Activated B cell treated with CpG ODN at 0.5 μM for 24 hours (primary cell): ENCODE measurements at regions of chrX and their contacts with region 1.

Region 1: GRCh38 chrX:110853610-110854009 is 58.0 kb upstream of the CHRDL1 start:
- DNase-seq: no peak
- ATAC-seq: no peak
- H3K4me3 Mint-ChIP-seq: no peak overlapping the region
- H3K27ac Mint-ChIP-seq: no peak overlapping the region
- H3K4me1 Mint-ChIP-seq: no peaks in the 10 kb centered on the region
- H3K27me3 Mint-ChIP-seq: peaks cover 3% of the 10 kb centered on the region
- CTCF ChIP-seq: no peak

Region 2: GRCh38 chrX:110759785-110760184 is 93.8 kb before region 1 on chrX:
- CTCF ChIA-PET with region 1: no interaction called
- POLR2A ChIA-PET with region 1: no interaction called
- intact Hi-C with region 1: no loop called
- DNase-seq: no peak
- ATAC-seq: no peak
- H3K4me3 Mint-ChIP-seq: no peak overlapping the region
- H3K27ac Mint-ChIP-seq: no peak overlapping the region
- H3K4me1 Mint-ChIP-seq: no peaks in the 10 kb centered on the region
- H3K27me3 Mint-ChIP-seq: no peaks in the 10 kb centered on the region
- CTCF ChIP-seq: no peak

Region 3: DNA sequence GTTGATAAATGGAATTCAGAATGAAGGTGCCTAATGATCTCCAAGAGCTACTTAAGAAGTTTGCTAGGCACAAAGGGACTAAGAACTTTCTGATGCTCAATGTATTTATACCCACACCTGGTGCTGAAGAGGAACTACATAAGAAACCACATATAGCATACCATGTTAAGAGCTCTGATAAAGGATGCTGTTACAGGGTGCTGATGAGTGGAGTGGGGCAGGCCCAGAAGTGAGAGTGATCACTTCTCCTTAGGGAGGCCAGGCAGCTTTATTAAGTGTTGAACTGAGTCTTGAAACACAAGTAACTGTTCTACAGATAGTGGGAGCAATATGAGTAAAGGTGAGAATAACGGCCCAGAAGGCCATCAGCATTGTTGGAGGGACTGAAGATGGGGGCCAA is 10.3 kb after region 1 on chrX:
- CTCF ChIA-PET with region 1: no interaction called
- POLR2A ChIA-PET with region 1: no interaction called
- intact Hi-C with region 1: no loop called
- DNase-seq: no peak
- ATAC-seq: no peak
- H3K4me3 Mint-ChIP-seq: no peak overlapping the region
- H3K27ac Mint-ChIP-seq: no peak overlapping the region
- H3K4me1 Mint-ChIP-seq: no peaks in the 10 kb centered on the region
- H3K27me3 Mint-ChIP-seq: no peaks in the 10 kb centered on the region
- CTCF ChIP-seq: no peak

Region 4: DNA sequence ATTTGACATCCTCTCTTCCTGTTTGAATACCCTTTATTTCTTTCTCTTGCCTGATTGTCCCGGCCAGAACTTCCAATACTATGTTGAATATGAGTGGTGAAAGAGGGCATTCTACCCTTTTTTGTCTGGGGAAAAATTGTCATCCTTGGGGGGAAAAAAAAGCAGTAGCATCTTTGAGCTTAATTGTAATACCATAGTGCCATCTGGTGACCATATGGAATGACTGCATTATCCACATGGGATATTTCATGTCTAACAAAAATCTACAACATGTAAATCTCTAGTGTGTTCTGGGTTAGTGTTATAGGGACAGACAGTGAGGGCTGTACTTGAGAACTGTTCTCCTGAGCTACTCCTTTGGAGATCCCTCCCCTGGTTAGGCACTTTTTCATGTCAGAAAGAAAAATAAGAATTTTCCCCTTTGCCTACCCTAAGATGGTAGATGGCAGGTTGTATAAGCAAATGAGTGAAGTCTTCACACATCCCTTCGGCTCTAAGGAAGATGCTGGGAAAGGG is 390.7 kb after region 1 on chrX:
- CTCF ChIA-PET with region 1: no interaction called
- POLR2A ChIA-PET with region 1: no interaction called
- intact Hi-C with region 1: loop called (anchors 10 kb)
- DNase-seq: no peak
- ATAC-seq: no peak
- H3K4me3 Mint-ChIP-seq: no peak overlapping the region
- H3K27ac Mint-ChIP-seq: no peak overlapping the region
- H3K4me1 Mint-ChIP-seq: no peaks in the 10 kb centered on the region
- H3K27me3 Mint-ChIP-seq: peaks cover 1% of the 10 kb centered on the region
- CTCF ChIP-seq: no peak